ENCODE measurements at regions of chr3 and their contacts with region 1.

Region 1: GRCh38 chr3:33636125-33636850 is 81.8 kb downstream of the CLASP2 start:
- DNase-seq: peak; percentile 64
- H3K4me3 ChIP-seq: no peak overlapping the region
- H3K27ac ChIP-seq: no peak overlapping the region
- H3K27me3 ChIP-seq: no peaks in the 10 kb centered on the region
- CTCF ChIP-seq: peak; percentile 53

Region 2: GRCh38 chr3:33798411-33799201 is 162.3 kb after region 1 on chr3 and contains the start of gene PDCD6IP:
- in situ Hi-C with region 1: loop called (anchors 25 kb)
- DNase-seq: peak; percentile 89
- H3K4me3 ChIP-seq: peak within 1 kb of the TSS; percentile 95
- H3K27ac ChIP-seq: peak within 1 kb of the TSS; percentile 88
- H3K27me3 ChIP-seq: no peaks in the 10 kb centered on the region
- CTCF ChIP-seq: peak; percentile 33

Measured in brain microvascular endothelial cell (primary cell).